T-cell (primary cell): ENCODE measurements at regions of chr3 and their contacts with region 1.

Region 1: GRCh38 chr3:30167541-30168011 is 438.8 kb upstream of the TGFBR2 start:
- DNase-seq: no peak
- ATAC-seq: no peak
- H3K4me3 ChIP-seq: no peak overlapping the region
- H3K4me3 Mint-ChIP-seq: no peak overlapping the region
- H3K27ac ChIP-seq: no peak overlapping the region
- H3K27ac Mint-ChIP-seq: no peak overlapping the region
- H3K4me1 ChIP-seq: no peaks in the 10 kb centered on the region
- H3K4me1 Mint-ChIP-seq: no peaks in the 10 kb centered on the region
- H3K27me3 ChIP-seq: no peaks in the 10 kb centered on the region
- H3K27me3 Mint-ChIP-seq: no peaks in the 10 kb centered on the region

Region 2: DNA sequence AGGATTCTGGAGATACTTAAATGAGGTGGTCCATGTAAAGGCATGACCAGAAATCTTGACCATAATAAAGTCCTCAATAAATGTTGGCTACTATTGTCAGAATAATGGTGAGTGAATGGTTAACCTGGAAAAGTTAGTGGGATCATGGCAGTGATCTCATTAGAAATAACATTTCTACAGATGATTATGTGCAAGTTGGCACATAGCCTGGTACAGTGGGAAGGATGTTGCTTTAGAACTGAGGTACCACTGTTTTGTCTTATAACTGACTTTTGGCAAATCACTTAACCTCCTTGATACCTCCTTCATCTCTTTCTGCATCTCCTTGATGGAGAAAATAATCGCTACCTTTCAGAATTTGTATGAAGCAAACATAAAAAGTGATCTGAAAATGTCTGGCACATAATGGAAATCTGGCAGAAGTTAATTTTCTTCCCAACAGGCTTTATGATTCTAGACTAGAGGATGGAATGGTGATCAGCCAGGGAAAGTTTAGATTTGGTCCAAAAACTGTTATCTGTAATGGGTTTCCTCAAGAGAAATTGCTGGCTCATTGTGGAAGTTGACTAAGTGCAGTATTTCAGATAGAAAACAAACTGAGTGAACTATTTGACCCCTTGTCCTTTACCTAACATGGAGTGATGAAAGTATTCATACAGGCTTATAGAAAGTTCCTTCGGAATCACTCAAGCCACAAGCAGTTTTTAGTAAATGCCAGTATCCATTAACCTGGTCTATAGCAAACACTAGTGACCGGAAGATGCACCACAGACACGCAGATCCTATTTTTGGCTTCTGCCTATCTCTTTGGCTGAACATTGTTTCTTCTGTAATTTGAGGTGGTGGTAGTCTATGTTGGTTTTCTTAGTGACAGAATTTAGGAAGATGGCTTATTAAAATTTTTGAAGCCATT is 10.7 kb before region 1 on chr3:
- CTCF ChIA-PET with region 1: no interaction called
- POLR2A ChIA-PET with region 1: no interaction called
- DNase-seq: no peak
- ATAC-seq: no peak
- H3K4me3 ChIP-seq: no peak overlapping the region
- H3K4me3 Mint-ChIP-seq: no peak overlapping the region
- H3K27ac ChIP-seq: no peak overlapping the region
- H3K27ac Mint-ChIP-seq: no peak overlapping the region
- H3K4me1 ChIP-seq: no peaks in the 10 kb centered on the region
- H3K4me1 Mint-ChIP-seq: no peaks in the 10 kb centered on the region
- H3K27me3 ChIP-seq: no peaks in the 10 kb centered on the region
- H3K27me3 Mint-ChIP-seq: peaks cover 0 to 6% of the 10 kb centered on the region in 2 donors

Region 3: GRCh38 chr3:31575448-31575847 is 1407.9 kb after region 1 on chr3:
- CTCF ChIA-PET with region 1: no interaction called
- POLR2A ChIA-PET with region 1: interaction called in 1 of 2 experiments, 10 read pairs
- DNase-seq: peak in 1 of 35 experiments; percentile 39
- ATAC-seq: peak; percentile 67 to 83 (median 79)
- H3K4me3 ChIP-seq: no peak overlapping the region
- H3K4me3 Mint-ChIP-seq: peak overlapping the region in 2 of 3 donors; percentile 4 to 17
- H3K27ac ChIP-seq: no peak overlapping the region
- H3K27ac Mint-ChIP-seq: peak overlapping the region; percentile 27 to 42
- H3K4me1 ChIP-seq: peaks cover 5 to 26% of the 10 kb centered on the region in 2 experiments
- H3K4me1 Mint-ChIP-seq: peaks cover 21 to 41% (median 35%) of the 10 kb centered on the region in 3 donors
- H3K27me3 ChIP-seq: no peaks in the 10 kb centered on the region
- H3K27me3 Mint-ChIP-seq: no peaks in the 10 kb centered on the region